Dorsolateral prefrontal cortex (tissue), 120 donors: ENCODE measurements at regions of chr12 and their contacts with region 1.

Region 1: DNA sequence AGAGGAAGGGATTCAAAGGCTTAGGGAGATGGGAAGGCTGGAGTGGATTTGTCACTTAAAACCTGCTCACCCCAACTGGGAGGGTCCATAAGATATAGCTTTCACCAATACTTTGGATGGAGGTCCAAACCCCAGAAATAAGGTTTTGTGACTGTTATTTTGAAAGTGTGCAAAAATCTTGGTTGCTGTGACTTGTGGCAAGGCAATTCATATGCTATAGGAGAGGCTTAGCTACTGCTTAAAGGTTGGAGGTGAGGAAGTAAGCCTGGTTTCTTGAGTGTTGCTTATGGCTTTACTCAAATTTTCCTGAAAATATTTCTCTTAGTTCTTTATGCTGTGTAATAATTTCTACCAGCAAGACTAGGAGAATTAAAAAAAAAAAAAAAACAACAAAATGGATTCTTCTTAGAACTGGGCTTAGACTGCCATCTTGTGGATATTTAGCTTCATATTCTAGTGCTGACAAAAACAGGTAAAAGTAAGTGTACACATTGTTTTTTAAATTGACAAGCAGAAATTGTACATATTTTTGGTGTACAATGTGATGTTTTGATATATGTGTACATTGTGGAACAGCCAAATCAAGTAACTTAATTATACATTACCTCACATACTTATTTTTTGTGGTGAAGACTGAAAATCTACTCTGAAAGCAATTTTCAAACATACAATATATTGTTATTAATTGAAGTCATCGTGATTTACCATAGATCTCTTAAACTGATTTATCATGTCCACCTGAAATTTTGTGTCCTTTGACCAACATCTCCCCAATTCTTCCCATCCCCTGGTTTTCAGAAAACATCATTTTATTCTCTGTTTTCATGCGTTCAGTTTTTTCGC is 23.0 kb downstream of the PDE6H start:
- DNase-seq: no peak
- H3K4me3 ChIP-seq: no peak overlapping the region
- H3K27ac ChIP-seq: no peak overlapping the region
- H3K27me3 ChIP-seq: no peaks in the 10 kb centered on the region
- CTCF ChIP-seq: peak; percentile 58 to 96 (median 76)

Region 2: GRCh38 chr12:14249368-14249767 is 746.4 kb before region 1 on chr12:
- intact Hi-C with region 1: no loop called
- DNase-seq: no peak
- H3K4me3 ChIP-seq: no peak overlapping the region
- H3K27ac ChIP-seq: peak overlapping the region in 57 of 59 donors; percentile 4 to 96 (median 82)
- H3K27me3 ChIP-seq: no peaks in the 10 kb centered on the region
- CTCF ChIP-seq: no peak

Region 3: DNA sequence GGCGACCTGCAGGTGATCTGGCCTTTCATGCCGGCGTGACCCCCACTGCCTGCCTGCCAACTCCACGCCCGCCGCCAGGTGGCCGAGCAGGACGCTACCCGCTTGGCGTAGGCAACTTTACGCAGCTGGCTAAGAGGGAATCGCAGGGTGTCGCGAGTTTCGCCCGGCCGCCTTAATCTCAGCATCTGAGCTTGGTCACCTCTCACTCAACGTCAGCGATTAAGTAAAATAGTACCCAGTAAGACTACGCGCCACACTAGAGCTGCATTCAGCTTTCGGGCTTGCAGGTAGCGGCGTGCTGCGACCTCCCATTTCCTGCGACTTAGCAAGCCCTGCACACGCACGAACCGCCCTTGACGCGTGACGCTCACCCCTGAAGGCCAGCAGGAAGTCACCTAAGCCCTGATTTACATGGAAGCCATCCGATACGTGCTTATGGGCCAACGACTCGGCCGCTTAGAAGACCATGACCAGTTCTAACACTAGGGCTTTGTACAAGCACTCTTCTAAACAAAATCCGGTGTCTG is 225.8 kb before region 1 on chr12:
- intact Hi-C with region 1: loop called in 1 of 2 experiments (anchors 10 kb)
- DNase-seq: peak; percentile 55 to 82 (median 73)
- H3K4me3 ChIP-seq: peak overlapping the region; percentile 71 to 98 (median 86)
- H3K27ac ChIP-seq: peak overlapping the region; percentile 51 to 98 (median 89)
- H3K27me3 ChIP-seq: no peaks in the 10 kb centered on the region
- CTCF ChIP-seq: peak; percentile 23 to 81 (median 68)

Region 4: DNA sequence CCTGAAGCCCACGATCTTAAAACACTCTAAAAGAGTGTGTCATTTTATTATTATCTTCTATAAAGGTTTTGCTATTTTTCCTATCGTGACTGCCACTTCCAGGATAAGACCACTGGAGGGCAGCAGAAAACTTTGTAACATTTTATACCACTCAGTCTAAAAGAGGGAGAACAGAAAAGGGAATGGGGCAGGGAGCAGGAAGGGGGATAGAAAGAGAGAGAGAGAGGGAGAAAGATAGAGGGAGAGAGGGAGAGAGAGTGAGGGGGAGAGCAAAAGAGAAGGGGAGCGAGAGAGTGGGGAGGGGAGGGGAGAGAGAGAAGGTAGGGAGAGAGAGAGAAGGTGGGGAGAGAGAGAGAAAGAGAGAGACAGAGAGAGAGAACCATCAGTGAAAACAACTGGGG is 150.5 kb before region 1 on chr12:
- intact Hi-C with region 1: loop called (anchors 1 to 5 kb)
- DNase-seq: peak in 2 of 10 donors; percentile 38 to 50
- H3K4me3 ChIP-seq: no peak overlapping the region
- H3K27ac ChIP-seq: no peak overlapping the region
- H3K27me3 ChIP-seq: no peaks in the 10 kb centered on the region
- CTCF ChIP-seq: peak; percentile 39 to 87 (median 75)

Region 5: DNA sequence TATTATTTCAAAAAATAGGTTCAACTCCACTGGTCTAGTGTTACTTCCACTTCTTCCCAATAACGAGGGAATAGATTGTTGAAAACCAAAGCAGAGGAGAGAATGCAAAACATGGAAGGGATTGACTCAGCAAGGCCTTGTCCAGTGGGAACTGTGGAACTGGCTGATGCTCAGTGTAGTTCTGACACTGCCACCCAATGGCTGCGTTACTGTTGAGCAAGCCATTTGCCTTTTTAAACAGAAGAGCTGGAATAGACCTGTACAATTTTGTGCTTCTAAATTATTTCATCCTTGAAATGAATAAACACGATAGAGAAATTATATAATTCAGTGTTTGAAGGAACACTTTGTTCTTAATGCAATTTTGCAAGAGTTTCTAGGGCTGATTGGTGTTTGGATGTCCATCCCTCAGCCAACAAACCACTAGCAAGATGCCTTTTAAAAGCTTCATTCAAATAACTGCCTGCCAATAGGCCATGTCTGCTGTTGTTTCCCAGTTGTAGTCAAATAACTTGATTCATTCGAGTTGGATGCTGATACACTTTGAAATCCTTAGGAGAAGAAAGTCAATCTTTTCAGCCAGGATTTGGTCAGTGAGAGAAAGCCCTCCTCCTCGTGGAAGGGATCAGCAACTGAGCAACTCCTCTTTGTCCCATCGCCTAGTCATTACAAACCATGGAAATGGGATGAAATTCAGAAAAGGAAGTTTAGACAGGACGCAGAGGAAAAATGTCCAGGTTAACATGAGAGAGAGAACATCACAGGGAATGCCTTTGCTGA is 102.9 kb before region 1 on chr12:
- intact Hi-C with region 1: loop called in 1 of 2 experiments (anchors 10 kb)
- DNase-seq: peak in 4 of 10 donors; percentile 15 to 55 (median 42)
- H3K4me3 ChIP-seq: no peak overlapping the region
- H3K27ac ChIP-seq: peak overlapping the region in 41 of 59 donors; percentile 4 to 74 (median 42)
- H3K27me3 ChIP-seq: no peaks in the 10 kb centered on the region
- CTCF ChIP-seq: peak in 33 of 56 donors; percentile 5 to 63 (median 24)

Region 6: DNA sequence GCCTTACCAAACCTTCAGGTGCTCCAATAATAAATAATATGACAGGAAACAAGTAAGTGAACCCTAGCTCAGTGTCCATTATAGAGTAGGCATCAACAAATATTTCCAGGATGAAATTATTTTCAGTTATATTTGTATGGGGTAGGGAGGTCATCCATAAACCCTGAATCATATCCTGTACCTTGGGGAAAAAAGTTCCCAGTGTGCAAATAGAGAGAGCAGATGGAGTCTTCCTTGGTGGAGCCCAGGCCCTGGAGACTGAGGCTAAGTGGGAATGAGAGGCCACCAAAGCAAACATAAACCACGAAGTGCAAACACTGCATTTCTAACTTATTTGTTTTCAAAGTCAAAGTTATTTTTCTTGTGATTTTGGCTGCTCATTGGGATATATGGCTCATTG is 48.9 kb before region 1 on chr12:
- intact Hi-C with region 1: no loop called
- DNase-seq: no peak
- H3K4me3 ChIP-seq: no peak overlapping the region
- H3K27ac ChIP-seq: no peak overlapping the region
- H3K27me3 ChIP-seq: no peaks in the 10 kb centered on the region
- CTCF ChIP-seq: no peak

Region 7: GRCh38 chr12:15033641-15034040 is 37.8 kb after region 1 on chr12:
- intact Hi-C with region 1: no loop called
- DNase-seq: no peak
- H3K4me3 ChIP-seq: no peak overlapping the region
- H3K27ac ChIP-seq: no peak overlapping the region
- H3K27me3 ChIP-seq: peaks cover 0 to 4% (median 0%) of the 10 kb centered on the region in 45 donors
- CTCF ChIP-seq: no peak

Region 8: DNA sequence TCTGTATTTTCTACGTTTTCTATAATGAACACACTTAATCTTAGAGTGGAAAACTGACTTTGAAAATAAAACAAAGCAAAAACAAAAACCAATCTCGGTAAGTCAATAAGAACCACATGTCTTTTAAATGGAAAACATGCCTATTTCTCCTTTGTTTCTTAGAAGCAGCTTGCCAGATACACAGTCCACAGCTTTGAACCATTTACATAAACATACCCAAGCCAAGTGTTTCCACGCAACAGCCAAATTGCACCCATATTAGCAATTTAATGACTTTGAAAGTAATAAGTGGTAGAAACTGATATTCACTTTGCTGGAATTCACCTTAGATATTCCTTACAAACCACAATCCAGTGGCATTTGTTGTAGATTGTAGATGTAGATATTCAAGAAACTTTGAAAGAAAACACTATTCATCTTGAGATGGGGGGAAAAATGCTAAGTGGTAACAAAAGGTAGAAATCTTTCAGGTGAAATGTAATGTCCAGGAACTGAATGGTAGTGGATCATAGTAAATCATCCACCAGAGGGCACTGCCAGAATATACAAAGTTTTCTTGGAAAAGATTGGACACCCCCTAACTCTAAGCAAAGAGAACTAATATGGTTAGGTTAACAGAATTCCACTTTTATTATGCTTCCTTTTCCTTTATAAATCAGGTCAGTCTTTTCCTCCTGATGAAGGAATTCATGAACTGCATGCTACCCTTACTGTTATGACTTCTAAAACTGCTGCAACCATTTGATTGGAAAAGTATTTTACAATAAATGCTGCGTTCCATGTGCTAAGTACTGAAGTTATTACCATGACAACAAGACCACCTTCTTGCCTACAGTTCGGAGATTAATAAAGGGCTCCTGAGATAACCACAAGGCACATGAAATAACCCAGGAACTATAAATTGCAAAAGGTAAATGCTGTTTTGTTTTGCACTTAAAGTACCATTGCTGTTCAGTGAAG is 155.6 kb after region 1 on chr12:
- intact Hi-C with region 1: loop called in 1 of 2 experiments (anchors 10 kb)
- DNase-seq: no peak
- H3K4me3 ChIP-seq: peak overlapping the region in 1 of 59 donors; percentile 11
- H3K27ac ChIP-seq: peak overlapping the region in 8 of 59 donors; percentile 5 to 52 (median 22)
- H3K27me3 ChIP-seq: peaks cover 0 to 6% (median 0%) of the 10 kb centered on the region in 45 donors
- CTCF ChIP-seq: peak; percentile 53 to 88 (median 71)

Region 9: GRCh38 chr12:15220994-15221885 is 225.4 kb after region 1 on chr12 and contains the start of gene RERG:
- intact Hi-C with region 1: loop called (anchors 5 kb)
- DNase-seq: peak; percentile 44 to 89 (median 74)
- H3K4me3 ChIP-seq: peak within 1 kb of the TSS; percentile 37 to 80 (median 67)
- H3K27ac ChIP-seq: peak within 1 kb of the TSS in 31 of 59 donors; percentile 13 to 81 (median 59)
- H3K27me3 ChIP-seq: no peaks in the 10 kb centered on the region
- CTCF ChIP-seq: peak; percentile 77 to 100 (median 97)
- total RNA-seq, gene RERG: 4.5 to 31.5 (median 13.9) TPM